ENCODE measurements at regions of chr17 and their contacts with region 1.

Region 1: DNA sequence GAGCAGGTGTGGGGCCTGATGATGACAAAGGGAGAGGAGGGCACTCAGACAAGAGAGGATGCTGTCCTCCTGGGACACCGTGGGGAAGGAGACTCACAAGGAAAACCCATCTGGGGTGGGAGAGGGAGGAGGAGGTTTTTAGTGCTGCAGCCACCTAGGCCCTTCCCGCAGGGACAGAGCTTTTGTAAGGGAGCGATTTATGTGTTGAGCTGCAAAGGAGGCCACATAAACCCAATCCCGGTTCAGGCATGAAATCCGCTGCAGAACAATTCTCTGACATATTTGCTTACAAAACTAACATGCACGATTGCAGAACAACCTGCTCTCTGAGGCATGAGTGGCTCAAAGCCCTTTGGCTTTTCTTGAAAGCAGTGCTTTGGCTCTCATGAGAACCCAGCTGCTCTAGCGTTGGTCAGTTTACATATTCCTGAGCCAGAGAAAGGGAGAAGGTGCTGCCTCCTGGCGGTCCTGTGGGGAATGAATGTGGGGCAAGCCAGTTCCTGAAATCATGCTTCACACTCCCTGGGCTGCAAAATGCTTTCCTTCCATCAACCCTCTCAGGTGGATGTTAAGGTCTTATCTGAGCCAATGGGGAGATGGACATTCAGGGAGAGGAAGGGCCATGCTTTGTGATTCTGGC is 122.4 kb upstream of the NLRP1 start:
- DNase-seq: peak in 8 of 9 donors; percentile 21 to 58 (median 42)
- ATAC-seq: peak; percentile 73
- H3K4me3 ChIP-seq: no peak overlapping the region
- H3K4me3 Mint-ChIP-seq: no peak overlapping the region
- H3K27ac ChIP-seq: no peak overlapping the region
- H3K27ac Mint-ChIP-seq: no peak overlapping the region
- H3K4me1 ChIP-seq: no peaks in the 10 kb centered on the region
- H3K4me1 Mint-ChIP-seq: peaks cover 0 to 1% (median 0%) of the 10 kb centered on the region in 7 donors
- H3K27me3 ChIP-seq: no peaks in the 10 kb centered on the region
- H3K27me3 Mint-ChIP-seq: peaks cover 3 to 41% (median 32%) of the 10 kb centered on the region in 5 donors

Region 2: GRCh38 chr17:5592382-5592781 is 114.3 kb before region 1 on chr17:
- CTCF ChIA-PET with region 1: interaction called, 32 read pairs
- POLR2A ChIA-PET with region 1: interaction called, 4 read pairs
- intact Hi-C with region 1: loop called (anchors 1 kb)
- DNase-seq: peak in 5 of 9 donors; percentile 36 to 54 (median 46)
- ATAC-seq: peak; percentile 45
- H3K4me3 ChIP-seq: no peak overlapping the region
- H3K4me3 Mint-ChIP-seq: no peak overlapping the region
- H3K27ac ChIP-seq: no peak overlapping the region
- H3K27ac Mint-ChIP-seq: no peak overlapping the region
- H3K4me1 ChIP-seq: peaks cover 0 to under 1% of the 10 kb centered on the region in 2 donors
- H3K4me1 Mint-ChIP-seq: peaks cover under 1 to 7% (median 3%) of the 10 kb centered on the region in 7 donors
- H3K27me3 ChIP-seq: no peaks in the 10 kb centered on the region
- H3K27me3 Mint-ChIP-seq: peaks cover 13 to 44% (median 19%) of the 10 kb centered on the region in 5 donors

Region 3: GRCh38 chr17:5610956-5611355 is 95.7 kb before region 1 on chr17:
- CTCF ChIA-PET with region 1: no interaction called
- POLR2A ChIA-PET with region 1: no interaction called
- intact Hi-C with region 1: no loop called
- DNase-seq: no peak
- ATAC-seq: peak; percentile 73
- H3K4me3 ChIP-seq: no peak overlapping the region
- H3K4me3 Mint-ChIP-seq: no peak overlapping the region
- H3K27ac ChIP-seq: no peak overlapping the region
- H3K27ac Mint-ChIP-seq: peak overlapping the region in 1 of 9 donors; percentile 3
- H3K4me1 ChIP-seq: no peaks in the 10 kb centered on the region
- H3K4me1 Mint-ChIP-seq: peaks cover 0 to 5% (median 0%) of the 10 kb centered on the region in 7 donors
- H3K27me3 ChIP-seq: no peaks in the 10 kb centered on the region
- H3K27me3 Mint-ChIP-seq: peaks cover 5 to 26% (median 12%) of the 10 kb centered on the region in 5 donors

Region 4: DNA sequence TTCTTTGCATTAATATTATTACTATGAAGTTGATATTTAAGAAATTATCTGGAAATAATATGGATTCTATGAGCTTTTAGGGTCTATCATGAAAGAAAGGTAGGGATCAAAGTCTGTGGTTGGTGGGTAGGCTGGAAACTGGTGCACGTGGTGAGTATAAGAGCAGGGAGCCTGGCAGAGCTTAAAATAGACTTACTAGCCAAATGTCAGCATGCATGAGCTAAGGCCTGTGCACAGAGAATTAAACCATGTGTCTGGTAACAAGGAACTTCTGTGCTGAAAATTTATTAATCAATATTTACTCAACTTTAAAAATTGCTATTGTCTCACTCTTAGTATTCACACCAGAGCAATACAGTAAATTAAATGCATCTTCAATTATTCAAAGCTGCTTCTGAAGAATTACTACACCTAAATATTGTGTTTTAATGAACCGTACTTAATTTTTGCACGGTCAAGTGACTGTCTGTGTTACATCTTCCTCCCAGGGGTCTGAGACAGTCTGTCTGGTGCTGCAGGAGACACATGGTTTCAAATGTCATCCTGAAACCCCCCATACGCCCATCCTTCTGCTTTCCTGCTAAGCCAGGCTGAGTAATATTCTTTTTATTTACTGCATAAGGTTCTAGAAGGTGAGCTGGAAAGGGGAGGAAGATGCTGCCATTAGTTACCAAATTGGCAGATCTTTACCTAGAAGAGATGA is 38.6 kb after region 1 on chr17:
- CTCF ChIA-PET with region 1: no interaction called
- POLR2A ChIA-PET with region 1: no interaction called
- intact Hi-C with region 1: no loop called
- DNase-seq: no peak
- ATAC-seq: no peak
- H3K4me3 ChIP-seq: no peak overlapping the region
- H3K4me3 Mint-ChIP-seq: no peak overlapping the region
- H3K27ac ChIP-seq: no peak overlapping the region
- H3K27ac Mint-ChIP-seq: no peak overlapping the region
- H3K4me1 ChIP-seq: no peaks in the 10 kb centered on the region
- H3K4me1 Mint-ChIP-seq: no peaks in the 10 kb centered on the region
- H3K27me3 ChIP-seq: no peaks in the 10 kb centered on the region
- H3K27me3 Mint-ChIP-seq: peaks cover 4 to 41% (median 19%) of the 10 kb centered on the region in 5 donors

Region 5: GRCh38 chr17:5769593-5770354 is 63.1 kb after region 1 on chr17:
- CTCF ChIA-PET with region 1: no interaction called
- POLR2A ChIA-PET with region 1: no interaction called
- intact Hi-C with region 1: no loop called
- DNase-seq: no peak
- ATAC-seq: no peak
- H3K4me3 ChIP-seq: no peak overlapping the region
- H3K4me3 Mint-ChIP-seq: no peak overlapping the region
- H3K27ac ChIP-seq: no peak overlapping the region
- H3K27ac Mint-ChIP-seq: no peak overlapping the region
- H3K4me1 ChIP-seq: no peaks in the 10 kb centered on the region
- H3K4me1 Mint-ChIP-seq: no peaks in the 10 kb centered on the region
- H3K27me3 ChIP-seq: no peaks in the 10 kb centered on the region
- H3K27me3 Mint-ChIP-seq: peaks cover 10 to 42% (median 16%) of the 10 kb centered on the region in 5 donors

Region 6: GRCh38 chr17:6421700-6422604 is 715.3 kb after region 1 on chr17:
- CTCF ChIA-PET with region 1: no interaction called
- POLR2A ChIA-PET with region 1: no interaction called
- intact Hi-C with region 1: loop called (anchors 5 kb)
- DNase-seq: peak; percentile 28 to 74 (median 56)
- ATAC-seq: peak; percentile 89
- H3K4me3 ChIP-seq: no peak overlapping the region
- H3K4me3 Mint-ChIP-seq: no peak overlapping the region
- H3K27ac ChIP-seq: no peak overlapping the region
- H3K27ac Mint-ChIP-seq: peak overlapping the region in 1 of 9 donors; percentile 25
- H3K4me1 ChIP-seq: peaks cover 0 to 5% of the 10 kb centered on the region in 2 donors
- H3K4me1 Mint-ChIP-seq: peaks cover 1 to 8% (median 3%) of the 10 kb centered on the region in 7 donors
- H3K27me3 ChIP-seq: no peaks in the 10 kb centered on the region
- H3K27me3 Mint-ChIP-seq: peaks cover 0 to 57% (median 11%) of the 10 kb centered on the region in 5 donors

Region 7: GRCh38 chr17:6435968-6436367 is 729.3 kb after region 1 on chr17:
- CTCF ChIA-PET with region 1: interaction called, 6 read pairs
- POLR2A ChIA-PET with region 1: no interaction called
- intact Hi-C with region 1: loop called (anchors 5 kb)
- DNase-seq: peak; percentile 33 to 61 (median 52)
- ATAC-seq: peak; percentile 98
- H3K4me3 ChIP-seq: no peak overlapping the region
- H3K4me3 Mint-ChIP-seq: no peak overlapping the region
- H3K27ac ChIP-seq: no peak overlapping the region
- H3K27ac Mint-ChIP-seq: peak overlapping the region in 2 of 9 donors; percentile 25 to 67
- H3K4me1 ChIP-seq: no peaks in the 10 kb centered on the region
- H3K4me1 Mint-ChIP-seq: peaks cover 0 to 2% (median 0%) of the 10 kb centered on the region in 7 donors
- H3K27me3 ChIP-seq: no peaks in the 10 kb centered on the region
- H3K27me3 Mint-ChIP-seq: peaks cover 7 to 73% (median 10%) of the 10 kb centered on the region in 5 donors

Region 8: DNA sequence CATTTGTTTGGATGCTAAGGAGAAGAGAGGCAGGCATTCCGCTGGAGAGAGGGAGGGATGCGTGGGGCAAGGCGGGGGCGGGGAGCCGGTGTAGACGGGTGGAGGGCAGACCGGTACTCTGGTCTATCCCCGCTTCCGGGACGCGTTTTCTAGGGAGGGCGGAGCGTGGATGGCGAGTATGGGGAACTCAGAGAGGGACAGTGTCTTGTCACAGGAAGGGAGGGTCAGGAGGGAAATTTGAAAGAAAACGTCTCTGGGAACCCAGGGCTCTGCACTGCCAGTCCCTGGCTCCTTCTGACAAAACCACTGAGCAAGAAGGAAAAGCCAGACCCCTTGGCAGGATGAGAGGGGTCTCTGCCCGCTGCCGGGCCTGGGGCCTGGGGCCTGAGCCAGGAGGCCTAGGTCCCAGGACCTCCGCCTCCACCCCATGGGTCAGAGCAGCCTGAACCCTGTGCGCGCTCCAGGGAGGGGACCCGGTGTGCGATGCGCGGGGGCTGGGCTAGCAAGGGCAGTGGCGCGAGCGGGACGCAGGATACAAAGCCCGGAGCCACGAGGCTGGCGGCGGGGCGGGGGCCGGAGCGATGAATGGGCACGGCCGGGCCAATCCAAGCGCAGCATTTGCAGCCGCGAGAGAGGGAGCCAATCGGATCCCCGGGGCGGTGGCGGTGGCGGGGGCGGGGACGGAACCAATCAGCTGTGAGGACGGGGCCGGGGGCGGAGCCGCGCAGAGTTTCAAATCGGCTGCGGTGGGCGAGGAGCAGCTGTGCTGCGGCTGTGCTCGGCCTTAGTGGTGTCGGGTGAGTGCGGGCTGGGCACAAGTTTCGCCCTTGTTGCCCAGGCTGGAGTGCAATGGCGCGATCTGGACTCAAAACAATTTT is 737.2 kb after region 1 on chr17 and contains the start of gene PIMREG:
- CTCF ChIA-PET with region 1: no interaction called
- POLR2A ChIA-PET with region 1: no interaction called
- intact Hi-C with region 1: loop called (anchors 5 kb)
- DNase-seq: peak; percentile 74 to 93 (median 84)
- ATAC-seq: peak; percentile 98
- H3K4me3 ChIP-seq: peak within 1 kb of the TSS; percentile 77
- H3K4me3 Mint-ChIP-seq: peak within 1 kb of the TSS; percentile 85 to 98 (median 92)
- H3K27ac ChIP-seq: peak within 1 kb of the TSS; percentile 56
- H3K27ac Mint-ChIP-seq: peak within 1 kb of the TSS in 8 of 9 donors; percentile 63 to 93 (median 84)
- H3K4me1 ChIP-seq: peaks cover 5 to 6% of the 10 kb centered on the region in 2 donors
- H3K4me1 Mint-ChIP-seq: peaks cover 10 to 15% (median 13%) of the 10 kb centered on the region in 7 donors
- H3K27me3 ChIP-seq: no peaks in the 10 kb centered on the region
- H3K27me3 Mint-ChIP-seq: peaks cover 0 to 39% (median 0%) of the 10 kb centered on the region in 5 donors
- total RNA-seq, gene PIMREG: 0.49 to 18.6 TPM in 2 of 5 experiments, not detected in the others

Region 9: DNA sequence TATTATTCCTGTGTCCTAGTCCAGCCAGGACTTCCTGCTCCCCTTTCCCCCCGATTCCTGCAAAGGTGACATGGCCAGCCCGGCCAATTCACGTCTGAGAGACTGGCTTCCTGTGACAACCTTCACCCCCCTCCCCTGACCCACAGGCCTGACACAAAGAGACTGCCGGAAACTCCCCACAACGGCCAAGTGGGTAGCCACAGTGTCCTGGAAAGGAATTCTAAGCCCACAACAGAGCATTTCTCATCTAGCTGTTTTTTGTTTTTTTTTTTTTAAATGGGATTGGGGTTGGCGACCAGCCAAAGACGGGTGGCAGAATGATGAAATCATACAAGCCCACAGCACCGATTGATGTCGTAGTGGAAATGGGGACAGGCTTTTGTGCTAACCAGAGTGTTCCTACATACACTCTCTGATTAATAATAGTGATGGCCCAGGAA is 1046.3 kb after region 1 on chr17:
- CTCF ChIA-PET with region 1: no interaction called
- POLR2A ChIA-PET with region 1: no interaction called
- intact Hi-C with region 1: no loop called
- DNase-seq: peak in 6 of 9 donors; percentile 4 to 53 (median 36)
- ATAC-seq: no peak
- H3K4me3 ChIP-seq: no peak overlapping the region
- H3K4me3 Mint-ChIP-seq: peak overlapping the region; percentile 13 to 66 (median 44)
- H3K27ac ChIP-seq: peak overlapping the region; percentile 26
- H3K27ac Mint-ChIP-seq: peak overlapping the region; percentile 24 to 100 (median 86)
- H3K4me1 ChIP-seq: peaks cover 26 to 30% of the 10 kb centered on the region in 2 donors
- H3K4me1 Mint-ChIP-seq: peaks cover 37 to 60% (median 48%) of the 10 kb centered on the region in 7 donors
- H3K27me3 ChIP-seq: no peaks in the 10 kb centered on the region
- H3K27me3 Mint-ChIP-seq: peaks cover 0 to 18% (median 0%) of the 10 kb centered on the region in 5 donors

Measured in naive thymus-derived CD4-positive, alpha-beta T cell (primary cell).